ENCODE measurements at regions of chr3 and their contacts with region 1.

Region 1: GRCh38 chr3:9852549-9852948 is 8.7 kb upstream of the RPUSD3 start:
- DNase-seq: no peak
- ATAC-seq: no peak

Region 2: GRCh38 chr3:9659849-9660248 is 192.7 kb before region 1 on chr3:
- intact Hi-C with region 1: no loop called
- DNase-seq: no peak
- ATAC-seq: no peak

Region 3: DNA sequence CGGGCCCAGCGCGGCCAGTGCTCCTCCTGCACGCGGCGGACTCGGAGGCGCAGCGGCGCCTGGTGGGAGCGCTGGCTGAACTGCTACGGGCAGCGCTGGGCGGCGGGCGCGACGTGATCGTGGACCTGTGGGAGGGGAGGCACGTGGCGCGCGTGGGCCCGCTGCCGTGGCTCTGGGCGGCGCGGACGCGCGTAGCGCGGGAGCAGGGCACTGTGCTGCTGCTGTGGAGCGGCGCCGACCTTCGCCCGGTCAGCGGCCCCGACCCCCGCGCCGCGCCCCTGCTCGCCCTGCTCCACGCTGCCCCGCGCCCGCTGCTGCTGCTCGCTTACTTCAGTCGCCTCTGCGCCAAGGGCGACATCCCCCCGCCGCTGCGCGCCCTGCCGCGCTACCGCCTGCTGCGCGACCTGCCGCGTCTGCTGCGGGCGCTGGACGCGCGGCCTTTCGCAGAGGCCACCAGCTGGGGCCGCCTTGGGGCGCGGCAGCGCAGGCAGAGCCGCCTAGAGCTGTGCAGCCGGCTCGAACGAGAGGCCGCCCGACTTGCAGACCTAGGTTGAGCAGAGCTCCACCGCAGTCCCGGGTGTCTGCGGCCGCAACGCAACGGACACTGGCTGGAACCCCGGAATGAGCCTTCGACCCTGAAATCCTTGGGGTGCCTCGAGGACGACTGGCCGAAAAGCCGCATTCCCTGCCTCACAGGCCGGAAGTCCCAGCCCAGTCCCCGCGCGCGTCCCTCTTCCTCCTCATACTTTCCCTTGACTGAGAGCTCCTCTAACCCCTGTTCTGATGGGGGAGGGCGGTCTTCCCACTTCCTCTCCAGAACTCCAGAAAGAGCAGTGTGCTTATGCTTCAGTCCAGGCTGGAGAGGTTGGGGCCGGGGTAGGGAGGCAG is 62.9 kb after region 1 on chr3:
- intact Hi-C with region 1: loop called in 1 of 2 experiments (anchors 10 kb)
- DNase-seq: peak; percentile 76 to 81
- ATAC-seq: peak; percentile 53

Measured in left colon (tissue), 2 donors.